ENCODE measurements at regions of chr16 and their contacts with region 1.

Region 1: DNA sequence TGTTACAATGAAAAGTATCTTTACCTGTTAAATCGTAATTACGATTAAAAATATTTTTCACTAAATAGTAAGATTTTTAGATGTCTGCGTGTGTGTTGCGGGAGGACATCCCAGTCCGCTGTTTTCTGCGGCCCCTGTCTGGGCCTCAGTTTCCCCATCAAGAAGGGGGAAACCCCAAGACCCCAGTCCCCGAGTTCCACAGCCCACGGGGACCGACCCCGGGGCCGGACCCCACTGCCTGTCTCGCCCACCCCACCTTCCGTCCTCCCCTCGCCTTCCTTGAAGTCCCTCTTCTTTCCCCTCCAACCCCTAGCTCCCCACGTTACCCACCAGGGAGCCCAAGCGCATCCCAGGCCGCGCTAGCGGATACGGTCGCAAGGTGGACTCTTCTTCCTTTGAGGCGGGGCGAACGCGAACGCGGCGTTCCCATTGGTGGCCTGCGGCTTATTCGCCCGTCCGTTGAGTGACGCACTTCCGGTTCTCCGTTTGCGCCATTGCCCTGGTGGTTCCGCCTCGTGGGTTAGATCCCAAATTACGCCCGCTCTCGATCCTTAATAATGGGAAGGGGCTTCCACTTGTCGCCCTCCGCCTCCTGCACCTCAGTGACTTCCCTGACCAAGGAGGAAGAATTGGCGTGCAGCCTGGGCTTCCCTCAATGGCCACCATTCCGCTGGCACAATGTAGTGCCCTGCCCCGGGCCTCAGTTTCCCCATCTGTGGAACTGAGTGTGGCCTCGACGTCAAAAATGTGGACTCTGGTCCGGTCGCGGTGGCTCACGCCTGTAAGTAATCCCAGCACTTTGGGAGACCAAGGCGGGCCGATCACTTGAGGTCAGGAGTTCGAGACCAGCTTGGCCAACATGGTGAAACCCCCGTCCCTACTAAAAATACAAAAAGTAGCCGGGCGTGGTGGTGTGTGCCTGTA is at the start of gene NSMCE1:
- DNase-seq: peak; percentile 91
- H3K4me3 ChIP-seq: peak within 1 kb of the TSS; percentile 78 to 90 (median 87)
- H3K27ac ChIP-seq: peak within 1 kb of the TSS; percentile 59
- H3K4me1 ChIP-seq: peaks cover 13% of the 10 kb centered on the region
- H3K27me3 ChIP-seq: no peaks in the 10 kb centered on the region
- CTCF ChIP-seq: peak in 1 of 2 donors; percentile 31
- total RNA-seq, gene NSMCE1: 71.6 to 81.2 TPM

Region 2: DNA sequence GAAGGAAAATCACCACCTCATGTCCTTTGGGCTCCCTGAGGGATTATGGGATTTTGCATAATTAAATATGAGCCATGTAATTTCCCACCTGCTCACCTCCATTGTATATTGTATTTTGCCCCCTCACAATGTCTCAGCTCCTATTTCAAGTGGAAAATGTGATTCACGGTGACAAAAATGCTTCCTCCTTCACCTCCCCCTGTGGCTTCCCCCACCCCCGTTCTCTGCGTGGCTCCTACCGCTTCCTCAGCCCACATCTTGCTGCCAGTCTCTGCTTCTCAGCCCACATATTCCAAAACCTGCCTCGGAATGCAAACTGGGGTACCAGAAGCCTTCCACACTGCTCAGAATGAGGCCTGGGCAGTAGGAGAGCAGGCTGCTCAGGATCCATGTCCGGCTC is 596.4 kb before region 1 on chr16:
- CTCF ChIA-PET with region 1: no interaction called
- dilution Hi-C with region 1: no loop called
- in situ Hi-C with region 1: no loop called
- intact Hi-C with region 1: no loop called
- DNase-seq: no peak
- H3K4me3 ChIP-seq: no peak overlapping the region
- H3K27ac ChIP-seq: no peak overlapping the region
- H3K4me1 ChIP-seq: no peaks in the 10 kb centered on the region
- H3K27me3 ChIP-seq: no peaks in the 10 kb centered on the region
- CTCF ChIP-seq: no peak

Region 3: DNA sequence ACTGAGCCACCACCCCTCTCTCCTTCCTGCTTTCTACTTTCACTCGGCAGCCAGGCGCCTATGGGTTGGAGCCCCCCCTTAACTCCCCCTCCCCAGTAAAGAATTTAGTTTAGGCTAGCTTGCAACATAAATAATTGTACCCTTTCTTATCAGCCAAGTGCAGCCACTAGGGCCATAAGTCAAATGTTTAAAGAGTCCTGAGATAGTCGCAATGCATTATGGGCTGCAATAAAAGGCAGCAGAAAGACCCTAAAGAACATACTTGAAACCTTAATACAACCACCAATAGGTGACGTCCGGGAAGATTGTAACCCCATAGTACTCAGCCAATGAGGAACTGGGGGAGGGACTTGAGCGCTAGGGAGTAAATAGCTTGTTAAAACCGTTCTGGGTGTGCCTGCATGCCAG is 161.4 kb before region 1 on chr16:
- CTCF ChIA-PET with region 1: no interaction called
- dilution Hi-C with region 1: no loop called
- in situ Hi-C with region 1: no loop called
- intact Hi-C with region 1: no loop called
- DNase-seq: no peak
- H3K4me3 ChIP-seq: no peak overlapping the region
- H3K27ac ChIP-seq: no peak overlapping the region
- H3K4me1 ChIP-seq: no peaks in the 10 kb centered on the region
- H3K27me3 ChIP-seq: no peaks in the 10 kb centered on the region
- CTCF ChIP-seq: no peak

Region 4: DNA sequence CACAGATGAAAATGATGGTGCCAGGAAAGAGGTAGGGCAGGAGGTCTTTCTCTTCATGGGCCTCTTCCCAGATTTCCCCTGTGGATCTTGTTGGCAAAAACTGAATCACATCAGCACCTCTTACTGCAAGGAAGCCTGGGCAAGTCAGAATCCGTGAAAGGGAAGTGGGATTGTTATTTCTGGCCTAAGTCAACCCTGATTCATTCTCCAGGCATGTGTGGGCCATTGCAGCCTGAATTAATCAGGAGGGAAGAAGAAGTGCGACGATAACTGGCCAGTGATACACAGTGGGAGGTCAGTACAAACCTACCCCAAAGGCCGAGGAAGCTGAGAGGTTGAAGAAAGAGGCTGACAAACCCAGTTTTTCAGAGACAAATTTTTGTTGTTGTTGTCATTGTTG is 17.8 kb after region 1 on chr16:
- CTCF ChIA-PET with region 1: interaction called, 3 read pairs
- dilution Hi-C with region 1: no loop called
- in situ Hi-C with region 1: no loop called
- intact Hi-C with region 1: loop called (anchors 2 kb)
- DNase-seq: peak; percentile 95
- H3K4me3 ChIP-seq: no peak overlapping the region
- H3K27ac ChIP-seq: peak overlapping the region; percentile 33
- H3K4me1 ChIP-seq: peaks cover 16% of the 10 kb centered on the region
- H3K27me3 ChIP-seq: no peaks in the 10 kb centered on the region
- CTCF ChIP-seq: no peak

Region 5: DNA sequence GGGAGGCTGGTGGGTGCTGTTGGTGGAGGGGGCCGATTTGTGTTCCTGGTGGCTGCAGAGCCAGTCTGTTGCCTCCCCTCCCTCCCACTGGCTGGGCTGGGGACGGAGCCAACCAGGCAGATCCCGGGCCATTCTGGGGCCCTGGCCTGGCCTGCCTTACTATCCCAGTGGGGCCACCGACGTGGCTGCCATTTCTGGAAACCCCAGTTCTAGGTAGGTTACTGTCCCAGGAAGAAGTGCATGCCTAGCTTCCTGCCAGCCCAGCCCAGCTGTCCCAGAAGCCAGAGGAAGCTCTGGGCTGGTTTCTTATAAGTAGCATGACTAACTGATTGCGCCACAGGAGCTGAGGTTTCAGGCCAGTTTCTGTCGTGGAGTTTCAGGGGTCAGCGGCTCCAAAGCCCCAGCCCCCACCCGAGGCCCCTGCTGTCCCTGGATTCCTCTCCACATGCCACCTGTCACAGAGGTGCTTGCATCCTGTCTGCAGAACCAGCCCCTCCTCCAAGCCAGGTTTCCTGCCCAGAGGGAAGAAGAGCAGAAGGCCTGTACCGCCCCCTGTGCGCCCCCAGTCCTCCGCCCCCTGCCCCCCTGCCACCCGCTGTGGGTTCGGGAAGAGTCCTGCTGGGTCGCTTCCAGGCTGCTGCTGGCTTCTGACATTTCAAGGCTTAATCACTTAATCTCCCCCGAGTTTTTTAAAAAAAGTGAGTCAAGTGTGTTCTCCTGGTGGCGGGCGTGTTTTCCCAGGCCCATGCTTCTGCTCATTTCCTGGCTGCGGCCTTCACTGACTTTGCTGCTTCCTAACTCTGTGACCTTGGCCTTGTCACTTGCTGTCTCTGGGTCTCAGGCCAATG is 58.3 kb after region 1 on chr16:
- CTCF ChIA-PET with region 1: no interaction called
- dilution Hi-C with region 1: no loop called
- in situ Hi-C with region 1: loop called in 1 of 2 experiments (anchors 10 kb)
- intact Hi-C with region 1: no loop called
- DNase-seq: peak; percentile 96
- H3K4me3 ChIP-seq: no peak overlapping the region
- H3K27ac ChIP-seq: peak overlapping the region; percentile 92
- H3K4me1 ChIP-seq: peaks cover 66% of the 10 kb centered on the region
- H3K27me3 ChIP-seq: no peaks in the 10 kb centered on the region
- CTCF ChIP-seq: peak in 1 of 2 donors; percentile 8